Upper lobe of right lung (tissue), 1 donor: ENCODE measurements at regions of chr3 and their contacts with region 1.

Region 1: DNA sequence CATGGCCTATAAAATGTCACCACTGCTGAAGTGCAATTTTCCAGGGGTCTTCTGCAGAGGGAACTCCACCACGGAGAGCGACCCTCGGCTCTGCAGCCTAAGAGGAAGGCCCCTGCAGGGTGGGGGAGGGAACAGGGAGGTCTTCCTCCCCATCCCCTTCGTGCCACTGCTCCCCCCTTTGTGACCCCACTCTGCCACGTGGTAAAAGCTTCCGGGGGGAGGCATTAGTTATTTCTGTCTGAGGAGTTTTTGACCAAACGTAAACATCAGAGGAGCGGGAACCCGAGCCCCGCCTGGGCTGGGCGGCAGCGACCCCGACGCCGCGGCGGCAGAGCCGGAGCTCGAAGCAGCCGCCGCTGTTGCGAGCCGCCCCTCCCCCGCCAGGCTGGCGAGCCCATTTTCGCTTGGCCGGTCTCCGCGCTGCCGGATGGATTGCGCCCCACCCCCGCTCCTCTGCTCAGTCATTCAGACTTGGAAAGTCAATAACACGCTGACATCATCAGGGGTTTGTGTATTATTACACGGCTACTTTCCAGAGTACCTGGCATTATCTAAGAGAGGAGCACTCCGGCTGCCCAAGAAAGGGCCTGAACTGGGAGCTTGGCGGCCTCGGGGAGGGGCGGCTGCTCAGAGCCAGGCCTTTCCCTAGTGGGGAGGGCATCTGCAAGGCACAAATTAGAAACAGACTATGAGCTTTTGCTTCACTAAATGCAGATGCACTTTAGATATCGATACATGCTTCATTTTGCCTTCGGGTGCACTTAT is 162.5 kb upstream of the TBL1XR1 start:
- DNase-seq: peak; percentile 96
- ATAC-seq: peak; percentile 91
- H3K4me3 ChIP-seq: peak overlapping the region; percentile 53
- H3K27ac ChIP-seq: peak overlapping the region; percentile 91
- H3K4me1 ChIP-seq: peaks cover 48% of the 10 kb centered on the region
- H3K27me3 ChIP-seq: no peaks in the 10 kb centered on the region
- CTCF ChIP-seq: no peak

Region 2: GRCh38 chr3:177069514-177070329 is 290.1 kb before region 1 on chr3:
- intact Hi-C with region 1: loop called (anchors 10 kb)
- DNase-seq: no peak
- ATAC-seq: no peak
- H3K4me3 ChIP-seq: no peak overlapping the region
- H3K27ac ChIP-seq: no peak overlapping the region
- H3K4me1 ChIP-seq: no peaks in the 10 kb centered on the region
- H3K27me3 ChIP-seq: no peaks in the 10 kb centered on the region
- CTCF ChIP-seq: no peak

Region 3: GRCh38 chr3:177197041-177197727 is 162.6 kb before region 1 on chr3 and contains the start of gene TBL1XR1:
- intact Hi-C with region 1: loop called (anchors 5 kb)
- DNase-seq: peak; percentile 94
- ATAC-seq: peak; percentile 91
- H3K4me3 ChIP-seq: peak within 1 kb of the TSS; percentile 71
- H3K27ac ChIP-seq: peak within 1 kb of the TSS; percentile 96
- H3K4me1 ChIP-seq: peaks cover 24% of the 10 kb centered on the region
- H3K27me3 ChIP-seq: no peaks in the 10 kb centered on the region
- CTCF ChIP-seq: no peak
- total RNA-seq, gene TBL1XR1: 156 TPM

Region 4: GRCh38 chr3:177448987-177449975 is 89.5 kb after region 1 on chr3:
- intact Hi-C with region 1: no loop called
- DNase-seq: peak; percentile 67
- ATAC-seq: peak; percentile 83
- H3K4me3 ChIP-seq: no peak overlapping the region
- H3K27ac ChIP-seq: peak overlapping the region; percentile 33
- H3K4me1 ChIP-seq: peaks cover 23% of the 10 kb centered on the region
- H3K27me3 ChIP-seq: no peaks in the 10 kb centered on the region
- CTCF ChIP-seq: no peak